Right ventricle myocardium superior (tissue), 1 donor: ENCODE measurements at regions of chr15 and their contacts with region 1.

Region 1: DNA sequence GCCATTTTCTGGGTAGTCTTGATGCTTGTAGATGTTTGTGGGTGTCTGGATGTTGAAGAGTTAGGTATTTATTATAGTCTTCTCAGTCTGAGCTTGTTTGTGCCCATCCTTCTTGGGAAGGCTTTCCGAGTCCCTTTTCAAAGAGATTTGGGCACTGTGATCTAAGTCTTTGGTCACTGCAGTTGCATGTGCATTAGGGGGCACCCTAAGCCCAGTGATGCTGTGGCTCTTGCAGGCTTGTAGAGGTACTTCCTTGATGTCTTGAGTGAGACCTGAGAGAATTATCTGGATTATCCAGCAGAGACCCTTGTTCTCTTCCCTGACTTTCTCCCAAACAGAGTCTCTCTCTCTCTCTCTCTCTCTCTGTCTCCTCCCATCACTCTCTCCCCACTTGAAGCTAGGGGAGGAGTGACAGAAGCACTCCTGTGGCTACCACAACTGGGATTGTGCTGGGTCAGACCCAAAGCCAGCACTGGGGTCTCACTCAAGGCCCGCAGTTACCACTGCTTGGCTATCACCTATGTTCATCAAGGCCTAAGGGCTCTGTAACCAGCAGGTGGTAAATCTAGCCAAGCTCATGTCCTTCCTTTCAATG is 68.5 kb downstream of the TMCO5A start:
- DNase-seq: peak; percentile 59
- ATAC-seq: peak; percentile 73

Region 2: DNA sequence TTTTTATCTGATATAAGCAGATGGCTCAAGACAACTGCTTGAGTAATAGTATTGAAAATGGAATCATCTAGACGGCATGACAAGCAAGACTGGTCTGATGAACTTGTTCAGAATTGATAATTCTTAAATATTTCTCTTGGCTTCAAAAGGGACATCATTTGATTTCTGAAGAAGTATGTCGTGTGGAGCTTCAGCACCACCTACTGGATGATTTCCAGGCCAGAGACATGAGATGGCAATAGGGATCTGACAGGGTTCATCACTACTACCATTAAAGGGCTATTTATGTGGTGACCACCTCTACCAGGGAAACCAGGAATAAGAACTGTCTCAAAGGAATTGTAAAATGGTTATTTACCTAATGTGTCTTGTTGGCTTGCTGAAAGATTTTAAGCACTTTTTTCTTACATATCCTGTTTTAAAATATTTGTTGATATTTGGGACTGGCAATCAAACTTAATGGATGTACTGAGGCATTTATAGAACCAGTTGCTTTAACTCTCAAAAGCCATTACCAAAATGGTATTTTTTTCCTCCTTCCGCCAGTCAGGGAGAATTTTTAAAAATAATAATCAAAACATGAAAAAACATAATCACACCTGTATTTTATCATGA is 351.4 kb after region 1 on chr15:
- intact Hi-C with region 1: loop called (anchors 5 kb)
- DNase-seq: peak; percentile 55
- ATAC-seq: peak; percentile 81